Cardiac septum (tissue), 1 donor: ENCODE measurements at regions of chr1 and their contacts with region 1.

Region 1: DNA sequence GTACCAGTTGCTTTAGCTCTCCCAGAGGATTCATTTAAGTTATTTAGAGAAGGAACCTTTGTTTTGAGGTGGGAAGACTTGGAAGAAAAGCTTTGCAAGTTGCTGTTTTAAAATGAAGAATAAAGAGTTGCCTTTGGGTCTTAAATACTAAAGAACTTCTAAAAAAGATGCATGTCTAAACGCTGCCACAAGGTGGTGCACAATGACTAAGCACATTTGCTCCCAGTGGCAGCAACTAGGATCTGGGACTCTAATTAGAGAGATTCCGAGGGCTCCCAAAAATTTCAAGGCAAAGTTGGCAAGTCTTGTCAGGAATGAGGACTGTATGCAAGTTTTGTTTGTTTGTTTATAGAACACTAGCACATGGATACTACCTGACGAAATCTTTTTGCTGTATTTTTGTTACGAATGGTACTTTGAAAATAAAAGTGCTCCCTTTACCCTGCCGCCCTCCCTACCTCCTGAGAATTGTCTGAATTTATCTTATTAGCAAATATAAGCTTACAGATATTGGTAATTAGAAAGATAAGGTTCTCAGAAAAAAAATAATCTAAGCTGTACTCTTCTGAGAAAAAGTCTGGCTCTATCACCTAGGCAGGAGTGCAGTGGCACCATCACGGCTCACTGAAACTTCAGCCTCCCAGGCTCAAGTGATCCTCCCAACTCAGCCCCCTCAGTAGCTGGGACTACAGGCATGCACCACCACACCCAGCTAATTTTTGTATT is 121.8 kb downstream of the HFM1 start:
- DNase-seq: no peak

Region 2: DNA sequence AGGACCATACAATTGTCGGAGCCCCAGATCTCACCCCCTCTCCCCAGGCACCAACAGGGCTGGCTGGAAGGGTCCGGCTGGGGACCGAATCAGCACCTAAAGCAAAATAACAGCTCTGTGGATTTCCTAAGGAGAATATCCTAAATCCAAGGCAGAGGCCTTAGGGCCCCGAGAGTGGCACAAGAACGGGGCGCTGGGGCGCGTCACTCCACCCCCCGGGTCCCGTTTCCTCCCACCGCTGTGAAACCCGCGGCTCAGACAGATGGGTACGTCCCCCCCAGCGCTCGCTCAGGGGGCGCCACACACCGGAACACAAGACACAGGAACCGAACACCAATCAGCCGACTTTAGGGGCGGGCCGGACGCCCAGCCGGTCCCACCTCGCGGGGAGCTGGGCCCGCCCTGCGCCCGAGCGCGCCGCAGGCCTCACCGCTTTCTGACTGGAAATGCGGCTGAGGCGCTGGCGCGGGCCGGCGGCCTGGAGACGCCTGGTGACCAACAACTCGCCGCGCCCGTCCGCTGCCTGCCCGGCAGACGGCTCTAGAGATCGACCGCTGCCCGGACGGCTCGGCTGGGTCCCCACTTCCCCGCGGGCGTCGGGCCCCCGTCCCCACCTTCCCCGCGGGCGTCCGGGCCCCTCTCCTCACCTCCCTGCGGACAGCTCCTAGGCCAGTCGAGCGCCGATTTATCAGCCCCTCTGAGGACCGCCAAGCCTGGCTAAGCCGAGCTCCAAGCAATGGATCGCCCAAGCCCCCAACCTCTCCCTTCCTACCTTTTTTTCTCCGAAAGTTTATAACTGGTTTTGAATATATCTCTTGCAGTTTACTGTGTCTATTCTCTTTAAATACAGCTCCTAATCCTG is 121.5 kb after region 1 on chr1 and contains the start of gene HFM1:
- intact Hi-C with region 1: loop called (anchors 2 kb)
- DNase-seq: peak; percentile 90
- total RNA-seq, gene HFM1: 2.7 TPM

Region 3: DNA sequence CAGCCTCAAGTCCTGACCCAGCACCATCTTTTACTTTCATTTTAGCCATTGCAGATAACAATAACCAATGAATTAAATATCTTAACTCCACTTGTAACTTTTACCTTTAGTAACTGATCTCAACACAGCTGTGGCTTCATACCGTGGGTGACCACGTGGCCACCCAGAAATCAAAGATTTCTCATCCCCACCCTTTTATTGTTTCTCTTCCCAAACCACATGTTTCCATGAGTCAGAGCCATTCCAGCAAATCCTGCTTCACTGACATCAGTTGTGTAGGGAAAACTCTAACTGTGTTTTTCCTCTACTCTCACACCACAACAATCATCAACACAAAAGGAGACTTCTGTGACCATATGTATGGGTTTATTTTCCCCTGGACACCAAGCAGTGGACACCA is 641.3 kb after region 1 on chr1:
- intact Hi-C with region 1: loop called (anchors 10 kb)
- DNase-seq: no peak

Region 4: GRCh38 chr1:92291372-92291999 is 1008.6 kb after region 1 on chr1:
- intact Hi-C with region 1: loop called (anchors 5 kb)
- DNase-seq: no peak